Esophagus muscularis mucosa (tissue), 4 donors: ENCODE measurements at regions of chr2 and their contacts with region 1.

Region 1: GRCh38 chr2:176814306-176815052 is 398.1 kb upstream of the HNRNPA3 start:
- DNase-seq: no peak
- H3K4me3 ChIP-seq: no peak overlapping the region
- H3K27ac ChIP-seq: no peak overlapping the region
- H3K4me1 ChIP-seq: peaks cover 0 to 5% (median 0%) of the 10 kb centered on the region in 4 donors
- H3K27me3 ChIP-seq: no peaks in the 10 kb centered on the region
- CTCF ChIP-seq: peak; percentile 54 to 75 (median 70)
- EP300 ChIP-seq: no peak
- POLR2A ChIP-seq: no peak

Region 2: DNA sequence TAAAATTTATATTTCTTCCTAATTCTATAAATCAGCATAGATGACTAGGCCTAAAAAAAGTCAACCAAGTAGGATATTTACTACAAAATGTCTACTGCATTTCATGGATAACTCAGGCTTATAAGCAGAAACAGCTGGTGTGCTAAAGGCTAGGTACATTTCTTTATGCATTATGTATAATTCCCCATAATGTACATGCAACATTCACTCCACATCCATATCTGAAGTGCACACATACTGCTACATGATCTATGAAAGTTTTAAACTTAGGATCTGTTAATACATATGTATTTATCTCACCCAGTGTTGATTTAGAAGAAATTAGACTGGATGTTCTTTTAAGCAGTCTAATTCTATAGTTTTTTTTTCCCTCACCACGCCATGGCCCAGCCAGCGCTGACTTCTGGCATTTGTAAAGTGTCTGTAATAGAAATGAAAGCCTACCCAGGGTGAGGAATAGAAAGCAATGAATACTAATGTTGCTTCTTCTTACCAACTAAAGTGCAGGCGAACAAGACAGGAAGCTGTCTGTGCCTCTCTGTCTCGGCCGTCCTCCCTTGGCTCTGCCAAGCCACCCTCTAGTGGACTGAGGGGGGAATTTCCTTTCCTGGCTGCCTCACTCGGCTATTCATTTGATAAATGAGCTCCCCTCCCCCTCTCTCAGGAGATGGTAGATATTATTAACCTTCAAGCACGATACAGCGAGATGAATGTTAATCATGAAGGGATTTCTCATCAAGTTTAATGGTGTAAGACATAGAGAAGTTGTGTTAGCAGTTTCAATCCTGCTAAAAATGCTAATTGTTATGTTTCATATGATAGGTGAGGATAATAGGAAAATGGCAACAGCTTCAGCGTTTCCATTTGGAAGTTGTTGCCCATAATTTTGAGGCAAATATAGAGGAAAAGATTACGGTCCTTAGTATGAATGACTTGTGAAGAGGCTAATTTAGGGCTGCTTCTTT is 160.7 kb before region 1 on chr2:
- intact Hi-C with region 1: loop called (anchors 5 kb)
- DNase-seq: no peak
- H3K4me3 ChIP-seq: no peak overlapping the region
- H3K27ac ChIP-seq: no peak overlapping the region
- H3K4me1 ChIP-seq: peaks cover 0 to 9% (median 6%) of the 10 kb centered on the region in 4 donors
- H3K27me3 ChIP-seq: peaks cover 0 to 25% (median 2%) of the 10 kb centered on the region in 4 donors
- CTCF ChIP-seq: peak; percentile 40 to 65 (median 55)
- EP300 ChIP-seq: no peak
- POLR2A ChIP-seq: no peak

Region 3: GRCh38 chr2:176852667-176853066 is 38.2 kb after region 1 on chr2:
- intact Hi-C with region 1: no loop called
- DNase-seq: no peak
- H3K4me3 ChIP-seq: no peak overlapping the region
- H3K27ac ChIP-seq: no peak overlapping the region
- H3K4me1 ChIP-seq: no peaks in the 10 kb centered on the region
- H3K27me3 ChIP-seq: peaks cover 0 to 20% (median 0%) of the 10 kb centered on the region in 4 donors
- CTCF ChIP-seq: no peak
- EP300 ChIP-seq: no peak
- POLR2A ChIP-seq: no peak